Cardiac septum (tissue), 1 donor: ENCODE measurements at regions of chr5 and their contacts with region 1.

Region 1: DNA sequence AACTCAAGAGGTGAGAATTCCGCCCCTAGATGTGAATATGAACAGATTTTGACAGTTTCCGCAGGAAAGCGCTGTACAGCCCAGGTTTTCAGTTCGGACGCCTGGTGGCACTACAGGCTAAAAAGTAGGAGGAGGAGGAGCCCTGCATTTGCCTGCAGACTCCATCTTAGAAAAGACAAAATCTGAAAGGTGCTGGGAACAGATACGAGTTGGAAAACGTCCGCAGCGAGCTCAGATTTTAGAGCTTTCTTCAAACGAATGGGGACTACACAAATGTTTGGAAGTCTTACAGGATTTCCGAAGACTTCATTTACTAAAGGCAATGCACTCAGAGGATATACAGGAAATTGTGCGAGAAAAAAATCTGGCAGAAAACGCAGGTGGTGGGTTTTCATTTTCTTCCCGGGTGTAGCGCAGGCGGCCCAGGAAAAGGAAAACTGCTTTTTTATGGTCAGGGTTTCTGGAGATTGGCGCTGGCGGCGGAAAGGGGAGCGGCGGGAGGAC is 9.9 kb upstream of the PCDHB2 start:
- DNase-seq: no peak

Region 2: GRCh38 chr5:141564216-141564692 is 479.7 kb after region 1 on chr5:
- intact Hi-C with region 1: loop called (anchors 10 kb)
- DNase-seq: no peak